BJ (cell line): ENCODE measurements at regions of chr16 and their contacts with region 1.

Region 1: DNA sequence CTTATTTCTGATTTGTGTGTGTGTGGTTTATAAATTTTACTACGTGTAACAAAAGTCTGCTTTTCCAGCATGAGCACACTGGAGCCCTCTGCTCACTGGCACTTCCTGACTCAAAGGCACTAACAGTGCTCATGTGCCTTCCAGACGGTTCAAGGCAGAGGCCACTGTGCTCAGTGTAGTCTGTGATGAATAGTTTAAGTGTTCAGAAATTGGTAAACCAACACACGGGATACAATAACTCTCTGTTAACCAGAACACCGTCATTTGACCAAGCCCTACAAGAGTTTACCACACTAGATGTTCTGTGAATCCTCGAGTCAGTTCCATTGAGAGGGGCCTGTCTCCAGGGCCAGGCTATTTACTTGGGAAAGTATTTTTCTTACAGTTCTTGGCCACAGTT is 191.9 kb downstream of the MRTFB start:
- DNase-seq: no peak
- H3K4me3 ChIP-seq: no peak overlapping the region
- H3K27me3 ChIP-seq: no peaks in the 10 kb centered on the region
- CTCF ChIP-seq: no peak

Region 2: DNA sequence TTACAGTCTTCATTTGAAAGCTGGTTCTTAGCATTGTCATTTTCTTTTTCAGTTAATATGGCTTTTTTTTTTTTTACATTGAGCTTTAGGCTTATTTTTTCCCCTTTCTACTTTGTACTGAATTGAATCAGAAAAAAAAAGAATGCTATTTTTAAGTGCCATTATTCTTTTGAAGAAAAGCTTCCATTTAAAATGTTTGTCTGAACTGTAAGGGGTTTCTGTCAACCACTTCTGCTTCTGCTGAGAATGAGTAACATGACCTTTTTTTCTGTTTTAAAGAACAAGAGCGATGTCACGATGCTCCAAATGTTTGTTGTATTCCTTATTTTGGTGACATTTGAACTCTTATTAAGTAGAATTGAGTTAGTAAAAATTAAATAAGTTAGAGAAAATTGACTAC is 141.9 kb before region 1 on chr16:
- CTCF ChIA-PET with region 1: no interaction called
- POLR2A ChIA-PET with region 1: no interaction called
- DNase-seq: no peak
- H3K4me3 ChIP-seq: no peak overlapping the region
- H3K27me3 ChIP-seq: no peaks in the 10 kb centered on the region
- CTCF ChIP-seq: no peak

Region 3: DNA sequence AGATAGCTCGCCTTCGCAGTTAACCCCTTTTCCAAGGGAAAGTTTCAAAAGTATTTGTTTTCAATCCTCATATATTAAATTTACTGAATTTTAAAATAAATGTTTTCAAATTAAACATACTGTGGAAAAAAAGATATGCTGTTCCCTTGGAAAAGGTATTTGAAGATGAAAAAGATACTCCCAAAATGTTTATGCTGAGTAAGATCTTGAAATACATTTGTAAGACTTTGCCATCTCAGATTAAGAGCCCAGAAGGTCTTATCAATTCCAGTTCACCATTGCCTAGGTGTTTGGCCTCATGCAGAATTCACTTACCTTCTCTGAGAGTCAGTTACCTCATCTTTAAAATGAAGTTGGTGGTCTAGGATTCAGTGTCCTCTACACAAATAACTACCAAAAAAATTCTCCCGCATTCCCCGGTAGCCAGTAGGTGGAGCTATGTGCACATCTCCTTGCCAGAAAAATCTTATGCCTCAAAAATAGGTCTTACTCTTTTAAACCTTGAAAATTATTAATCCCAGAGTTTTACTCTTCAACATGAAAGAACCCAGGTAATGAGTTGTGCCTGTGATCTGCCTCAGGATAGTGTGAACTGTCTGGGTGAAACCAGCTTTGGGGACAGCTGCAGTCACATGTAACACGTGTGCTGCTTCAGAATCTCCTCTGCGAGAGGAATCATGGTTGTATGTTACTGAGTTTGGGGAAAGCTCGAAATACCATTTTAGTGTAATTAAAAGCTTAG is 13.5 kb before region 1 on chr16:
- CTCF ChIA-PET with region 1: interaction called, 14 read pairs
- POLR2A ChIA-PET with region 1: no interaction called
- DNase-seq: no peak
- H3K4me3 ChIP-seq: no peak overlapping the region
- H3K27me3 ChIP-seq: no peaks in the 10 kb centered on the region
- CTCF ChIP-seq: peak; percentile 88

Region 4: DNA sequence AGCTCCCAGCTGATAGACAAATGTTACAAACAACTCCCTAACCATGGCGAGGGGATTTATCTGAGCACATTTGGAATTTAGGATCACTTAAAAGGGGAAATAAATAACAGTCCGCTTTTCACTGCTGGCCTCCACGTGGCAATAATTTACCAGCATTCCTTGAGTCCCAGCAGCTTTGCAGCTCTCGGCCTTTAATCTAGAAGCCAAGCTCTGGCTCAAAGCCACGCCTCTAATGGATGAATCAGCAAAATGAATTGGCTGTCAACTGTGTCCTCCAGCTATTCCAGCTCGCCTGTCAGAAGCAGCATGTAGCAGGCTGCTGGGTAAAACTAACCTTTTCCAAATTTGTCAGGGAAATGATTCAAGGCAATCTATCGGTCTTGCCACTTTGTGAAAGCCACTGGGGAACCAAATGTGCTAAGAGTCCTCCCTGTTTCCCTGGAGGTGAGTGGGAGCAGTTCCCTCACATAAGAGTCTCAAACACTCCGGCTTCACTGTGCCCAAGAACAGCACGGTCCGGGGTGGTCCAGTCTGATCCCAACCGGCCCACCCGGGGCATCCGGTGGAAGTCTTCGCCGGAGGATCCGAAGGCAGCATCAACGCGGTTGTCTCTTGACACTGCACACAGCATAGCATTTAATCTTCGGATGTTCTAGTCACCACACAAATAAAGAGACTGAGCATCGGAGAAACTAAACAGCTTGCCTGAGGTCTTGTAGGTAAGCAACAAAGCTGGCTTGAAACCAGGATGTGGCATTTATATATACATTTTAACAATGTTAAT is 223.7 kb after region 1 on chr16:
- CTCF ChIA-PET with region 1: no interaction called
- POLR2A ChIA-PET with region 1: interaction called, 15 read pairs
- DNase-seq: peak; percentile 85
- H3K4me3 ChIP-seq: peak overlapping the region; percentile 23
- H3K27me3 ChIP-seq: no peaks in the 10 kb centered on the region
- CTCF ChIP-seq: no peak